ENCODE measurements at regions of chr14 and their contacts with region 1.

Region 1: DNA sequence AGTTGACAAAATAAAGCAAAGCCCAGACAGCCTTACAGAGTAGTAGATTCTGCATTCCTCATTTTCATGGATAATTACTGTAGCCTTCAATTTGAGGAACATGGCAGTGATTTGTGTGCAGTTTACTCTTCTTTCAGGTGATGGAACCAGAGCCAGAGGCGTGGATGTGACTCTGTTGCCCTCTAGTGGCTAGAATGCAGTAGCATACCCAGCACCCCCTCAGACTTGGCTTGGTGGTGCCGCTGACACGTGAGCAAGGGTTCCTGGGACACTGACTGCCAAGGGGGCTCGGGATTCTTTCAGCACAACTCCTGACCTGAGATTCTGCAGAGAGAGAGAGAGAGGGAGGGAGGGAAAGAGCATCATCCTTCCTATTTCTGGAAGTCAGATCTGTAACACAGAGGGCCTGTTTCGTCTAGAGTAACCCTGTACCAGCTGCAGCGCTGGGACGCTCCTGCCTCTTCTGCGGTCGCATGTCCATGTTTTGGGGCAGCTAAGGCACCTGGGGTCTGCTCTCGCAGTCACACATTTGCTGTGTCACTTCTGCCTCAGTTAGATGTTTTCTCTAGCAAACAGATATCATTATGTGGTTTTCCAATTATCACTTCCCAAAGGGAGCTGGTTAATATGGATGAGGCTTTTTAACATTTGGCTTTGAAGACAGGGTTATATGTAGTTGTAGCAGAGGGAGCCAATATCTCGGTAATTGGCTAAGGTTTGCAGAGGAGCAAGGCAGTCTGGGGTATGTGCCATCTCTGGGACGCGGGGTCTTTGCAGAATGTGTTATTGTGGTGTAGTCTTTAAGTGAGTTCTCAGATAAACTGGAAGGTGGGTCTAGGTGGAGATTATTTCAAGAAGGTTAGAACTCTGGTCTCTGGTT is 428.1 kb downstream of the NRXN3 start:
- DNase-seq: peak in 6 of 9 donors; percentile 3 to 23 (median 18)
- ATAC-seq: peak; percentile 53
- H3K4me3 ChIP-seq: no peak overlapping the region
- H3K4me3 Mint-ChIP-seq: no peak overlapping the region
- H3K27ac ChIP-seq: no peak overlapping the region
- H3K27ac Mint-ChIP-seq: no peak overlapping the region
- H3K4me1 ChIP-seq: no peaks in the 10 kb centered on the region
- H3K4me1 Mint-ChIP-seq: no peaks in the 10 kb centered on the region
- H3K27me3 ChIP-seq: no peaks in the 10 kb centered on the region
- H3K27me3 Mint-ChIP-seq: peaks cover 0 to 35% (median 10%) of the 10 kb centered on the region in 5 donors

Region 2: DNA sequence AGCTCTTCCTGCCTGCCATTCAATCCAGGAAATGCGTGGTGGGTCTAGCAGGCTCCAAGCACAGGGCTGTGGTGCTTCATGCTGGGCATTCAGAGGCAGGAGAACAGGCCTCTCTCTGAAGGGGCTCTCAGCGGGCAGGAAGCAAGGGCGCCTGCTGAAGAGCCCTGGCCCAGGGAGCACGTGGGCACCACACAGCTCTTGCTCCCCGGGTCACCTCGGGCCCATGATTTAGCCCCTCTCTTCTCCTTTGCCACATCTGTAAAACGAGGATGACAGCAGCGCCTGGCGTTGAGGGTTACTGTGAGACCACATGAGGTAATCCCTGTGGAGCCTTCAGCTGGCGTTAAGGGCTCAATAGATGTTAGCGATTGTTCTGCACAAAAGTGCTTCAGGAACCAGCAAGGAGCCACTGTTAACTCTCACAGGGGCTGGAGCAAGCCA is 944.3 kb before region 1 on chr14:
- CTCF ChIA-PET with region 1: no interaction called
- POLR2A ChIA-PET with region 1: no interaction called
- intact Hi-C with region 1: loop called in 1 of 2 experiments (anchors 10 kb)
- DNase-seq: no peak
- ATAC-seq: no peak
- H3K4me3 ChIP-seq: no peak overlapping the region
- H3K4me3 Mint-ChIP-seq: no peak overlapping the region
- H3K27ac ChIP-seq: no peak overlapping the region
- H3K27ac Mint-ChIP-seq: peak overlapping the region in 3 of 9 donors; percentile 36 to 62 (median 60)
- H3K4me1 ChIP-seq: no peaks in the 10 kb centered on the region
- H3K4me1 Mint-ChIP-seq: peaks cover 0 to 25% (median 0%) of the 10 kb centered on the region in 7 donors
- H3K27me3 ChIP-seq: no peaks in the 10 kb centered on the region
- H3K27me3 Mint-ChIP-seq: no peaks in the 10 kb centered on the region

Region 3: DNA sequence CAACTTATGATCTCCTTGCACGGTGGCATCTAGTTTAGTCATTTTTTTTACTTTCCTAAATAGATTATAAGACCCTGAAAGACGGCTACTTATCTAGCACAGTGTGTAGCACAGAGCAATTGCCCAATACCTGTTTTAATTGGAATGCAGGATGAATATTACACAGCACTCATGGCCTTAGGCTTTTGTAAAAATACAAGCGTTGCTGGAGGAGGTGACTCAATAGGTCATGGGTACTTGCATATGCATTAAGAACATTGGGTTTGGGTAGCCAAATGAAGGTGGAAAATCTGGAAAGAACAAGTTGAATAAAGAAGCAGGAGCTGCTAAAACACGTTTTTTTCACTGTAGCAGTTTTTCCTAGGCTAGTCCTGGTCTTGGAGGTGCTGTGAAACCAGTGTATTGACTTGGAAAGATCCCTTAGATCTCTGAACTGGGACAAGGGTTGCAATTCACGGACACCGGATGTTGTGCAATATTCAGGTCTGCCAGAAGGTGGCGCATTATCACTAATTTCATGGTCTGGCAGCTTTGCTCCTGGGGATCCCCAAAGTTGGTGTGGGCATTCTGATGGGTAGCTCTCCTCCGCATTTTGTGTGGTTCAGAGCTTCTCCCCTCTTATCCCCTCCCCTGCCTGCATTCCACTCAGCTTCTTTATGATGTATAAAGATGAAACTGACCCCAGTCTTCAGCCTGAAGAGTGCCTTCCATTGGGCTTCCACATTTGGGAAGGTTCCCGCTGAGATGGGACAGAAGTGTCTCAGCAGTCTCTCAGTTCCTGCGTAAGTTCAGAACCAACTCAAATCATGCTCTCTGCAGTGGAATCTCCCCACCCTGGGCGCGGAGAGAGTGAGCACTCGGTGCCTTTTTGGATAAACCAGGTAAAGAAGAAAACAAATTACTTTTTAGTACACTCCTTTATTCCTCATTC is 149.9 kb before region 1 on chr14:
- CTCF ChIA-PET with region 1: no interaction called
- POLR2A ChIA-PET with region 1: no interaction called
- intact Hi-C with region 1: loop called in 1 of 2 experiments (anchors 1 kb)
- DNase-seq: peak in 2 of 9 donors; percentile 4 to 42
- ATAC-seq: no peak
- H3K4me3 ChIP-seq: no peak overlapping the region
- H3K4me3 Mint-ChIP-seq: no peak overlapping the region
- H3K27ac ChIP-seq: no peak overlapping the region
- H3K27ac Mint-ChIP-seq: no peak overlapping the region
- H3K4me1 ChIP-seq: no peaks in the 10 kb centered on the region
- H3K4me1 Mint-ChIP-seq: no peaks in the 10 kb centered on the region
- H3K27me3 ChIP-seq: no peaks in the 10 kb centered on the region
- H3K27me3 Mint-ChIP-seq: peaks cover 0 to 19% (median 3%) of the 10 kb centered on the region in 5 donors

Region 4: DNA sequence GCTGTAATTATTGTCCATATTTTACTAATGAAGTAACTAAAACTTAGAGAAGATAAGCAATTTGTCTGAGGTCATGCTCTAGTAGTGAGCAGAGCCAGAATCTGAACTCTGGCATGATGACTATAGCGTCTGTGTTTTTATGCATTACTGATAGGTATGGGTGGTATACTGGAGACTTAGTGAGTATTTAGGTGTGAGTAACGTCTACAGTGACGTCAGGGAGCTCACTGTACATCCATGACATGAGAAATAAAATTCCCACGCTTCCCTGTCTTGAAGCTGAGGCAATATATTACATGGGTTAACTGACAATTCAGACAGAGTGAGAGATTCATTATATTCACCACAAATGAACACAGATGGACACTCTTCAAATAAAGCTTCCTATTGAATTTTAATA is 293.0 kb after region 1 on chr14:
- CTCF ChIA-PET with region 1: no interaction called
- POLR2A ChIA-PET with region 1: no interaction called
- intact Hi-C with region 1: no loop called
- DNase-seq: no peak
- ATAC-seq: no peak
- H3K4me3 ChIP-seq: no peak overlapping the region
- H3K4me3 Mint-ChIP-seq: no peak overlapping the region
- H3K27ac ChIP-seq: no peak overlapping the region
- H3K27ac Mint-ChIP-seq: no peak overlapping the region
- H3K4me1 ChIP-seq: no peaks in the 10 kb centered on the region
- H3K4me1 Mint-ChIP-seq: no peaks in the 10 kb centered on the region
- H3K27me3 ChIP-seq: no peaks in the 10 kb centered on the region
- H3K27me3 Mint-ChIP-seq: peaks cover 0 to 13% (median 0%) of the 10 kb centered on the region in 5 donors

Measured in naive thymus-derived CD4-positive, alpha-beta T cell (primary cell).